BJ (cell line): ENCODE measurements at regions of chr22 and their contacts with region 1.

Region 1: DNA sequence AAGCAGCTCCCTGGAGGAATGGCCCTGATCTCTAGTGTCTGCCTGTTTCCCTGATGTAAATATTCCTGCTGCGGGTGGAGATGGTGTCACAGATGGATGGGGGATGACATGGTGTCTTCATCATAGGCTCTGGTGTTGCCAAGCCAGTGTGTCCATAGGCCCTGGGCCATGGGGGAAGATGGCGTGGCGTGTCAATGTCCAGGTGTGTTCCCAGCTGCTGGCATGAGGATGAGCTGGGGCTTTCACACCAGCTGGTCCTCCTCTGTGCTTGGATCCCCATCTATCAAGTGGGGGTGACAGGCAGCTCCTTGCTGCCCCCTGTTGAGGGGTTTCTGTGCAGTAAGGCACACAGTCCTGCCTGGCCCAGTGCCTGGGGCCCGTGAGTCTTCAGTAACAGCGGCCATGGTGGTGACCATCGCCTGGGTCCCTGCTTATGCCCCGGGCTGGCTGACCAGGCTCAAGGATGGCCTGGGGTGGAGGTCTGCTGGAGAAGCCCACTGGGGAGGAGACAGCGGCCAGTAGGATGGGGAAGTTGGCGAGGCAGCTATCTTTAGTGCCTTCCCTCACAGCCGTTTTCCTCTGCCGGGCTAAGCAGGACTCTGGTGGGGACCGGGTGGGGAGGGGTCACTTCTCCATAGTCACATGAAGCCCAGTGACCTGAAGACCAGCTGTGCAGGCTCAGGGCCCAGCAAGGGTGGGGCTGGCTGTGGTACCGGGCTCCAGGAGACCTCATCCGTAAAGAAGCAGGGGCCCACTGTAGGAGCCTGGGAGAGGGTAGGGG is 12.7 kb downstream of the RPL3 start:
- DNase-seq: no peak
- H3K4me3 ChIP-seq: no peak overlapping the region
- H3K27me3 ChIP-seq: no peaks in the 10 kb centered on the region
- CTCF ChIP-seq: peak; percentile 27; the same call in 1 of the 2 replicates

Region 2: GRCh38 chr22:39178206-39179111 is 128.3 kb before region 1 on chr22:
- CTCF ChIA-PET with region 1: interaction called, 164 read pairs
- POLR2A ChIA-PET with region 1: interaction called, 3 read pairs
- DNase-seq: peak; percentile 21
- H3K4me3 ChIP-seq: no peak overlapping the region
- H3K27me3 ChIP-seq: no peaks in the 10 kb centered on the region
- CTCF ChIP-seq: no peak

Region 3: GRCh38 chr22:39284708-39285380 is 21.9 kb before region 1 on chr22:
- CTCF ChIA-PET with region 1: no interaction called
- POLR2A ChIA-PET with region 1: no interaction called
- DNase-seq: no peak
- H3K4me3 ChIP-seq: no peak overlapping the region
- H3K27me3 ChIP-seq: no peaks in the 10 kb centered on the region
- CTCF ChIP-seq: no peak